AG04450 (cell line): ENCODE measurements at regions of chr19 and their contacts with region 1.

Region 1: DNA sequence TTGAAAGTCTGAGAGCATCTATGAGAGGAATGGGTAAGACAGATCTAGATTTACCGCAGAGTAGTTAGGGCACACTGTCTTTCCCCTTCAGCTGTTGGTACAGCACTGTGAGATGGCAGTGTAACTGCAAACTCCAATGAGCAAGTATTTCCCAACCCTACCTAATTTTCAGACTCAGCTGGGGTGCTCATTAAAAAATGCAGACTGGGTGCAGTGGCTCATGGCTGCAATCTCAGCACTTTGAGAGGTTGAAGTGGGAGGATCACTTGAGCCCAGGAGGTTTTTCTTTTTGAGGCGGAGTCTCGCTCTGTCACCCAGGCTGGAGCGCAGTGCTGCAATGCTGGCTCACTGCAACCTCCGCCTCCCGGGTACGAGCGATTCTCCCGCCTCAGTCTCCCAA is 12.6 kb downstream of the QPCTL start:
- DNase-seq: no peak
- H3K4me3 ChIP-seq: no peak overlapping the region
- H3K27ac ChIP-seq: no peak overlapping the region
- H3K27me3 ChIP-seq: no peaks in the 10 kb centered on the region
- CTCF ChIP-seq: no peak

Region 2: DNA sequence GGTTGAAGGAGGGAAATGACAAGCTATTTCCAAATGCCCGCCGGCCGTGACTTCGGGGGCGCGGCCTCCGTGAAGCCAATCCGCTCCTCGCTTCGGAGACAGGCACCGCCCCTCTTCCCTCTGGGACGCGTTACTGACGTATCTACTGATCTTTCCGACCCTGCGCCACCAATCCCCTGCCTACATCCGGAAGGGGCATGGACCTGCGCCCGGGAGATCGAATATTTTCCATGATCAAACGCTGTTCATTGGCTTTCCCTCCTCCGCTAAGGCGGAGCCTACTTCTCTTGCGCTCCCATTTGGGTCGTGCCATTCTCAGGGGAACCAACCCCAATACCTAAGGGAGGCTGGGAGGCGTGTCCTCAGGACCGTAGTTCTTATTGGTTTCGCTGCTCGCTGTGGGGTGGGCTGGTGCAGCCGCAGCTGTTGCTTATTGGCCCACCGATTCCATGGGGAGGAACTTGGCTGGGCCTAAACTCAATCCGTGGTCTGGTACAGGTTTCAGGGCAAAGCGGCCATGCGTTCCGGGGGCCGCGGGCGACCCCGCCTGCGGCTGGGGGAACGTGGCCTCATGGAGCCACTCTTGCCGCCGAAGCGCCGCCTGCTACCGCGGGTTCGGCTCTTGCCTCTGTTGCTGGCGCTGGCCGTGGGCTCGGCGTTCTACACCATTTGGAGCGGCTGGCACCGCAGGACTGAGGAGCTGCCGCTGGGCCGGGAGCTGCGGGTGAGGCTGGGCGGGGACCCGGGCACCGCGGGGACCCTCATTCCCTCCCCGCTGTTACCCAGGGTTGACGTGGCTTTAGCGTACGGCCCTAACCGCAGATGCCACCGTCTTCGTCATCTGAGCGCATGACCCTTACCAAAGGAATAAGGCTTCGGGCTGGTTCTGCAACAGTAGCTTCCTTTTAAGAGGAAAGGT is 12.7 kb before region 1 on chr19 and contains the start of gene QPCTL:
- CTCF ChIA-PET with region 1: interaction called, 56 read pairs
- POLR2A ChIA-PET with region 1: interaction called, 5 read pairs
- DNase-seq: peak; percentile 99
- H3K4me3 ChIP-seq: peak within 1 kb of the TSS; percentile 96
- H3K27ac ChIP-seq: peak within 1 kb of the TSS; percentile 89
- H3K27me3 ChIP-seq: no peaks in the 10 kb centered on the region
- CTCF ChIP-seq: no peak
- polyA plus RNA-seq, gene QPCTL: 6.7 and 9.5 TPM in 2 replicates

Region 3: GRCh38 chr19:45779231-45780145 is 74.4 kb after region 1 on chr19:
- CTCF ChIA-PET with region 1: no interaction called
- POLR2A ChIA-PET with region 1: no interaction called
- DNase-seq: no peak
- H3K4me3 ChIP-seq: no peak overlapping the region
- H3K27ac ChIP-seq: no peak overlapping the region
- H3K27me3 ChIP-seq: no peaks in the 10 kb centered on the region
- CTCF ChIP-seq: no peak; the same call in 1 of the 2 replicates